ENCODE measurements at regions of chr9 and their contacts with region 1.

Region 1: DNA sequence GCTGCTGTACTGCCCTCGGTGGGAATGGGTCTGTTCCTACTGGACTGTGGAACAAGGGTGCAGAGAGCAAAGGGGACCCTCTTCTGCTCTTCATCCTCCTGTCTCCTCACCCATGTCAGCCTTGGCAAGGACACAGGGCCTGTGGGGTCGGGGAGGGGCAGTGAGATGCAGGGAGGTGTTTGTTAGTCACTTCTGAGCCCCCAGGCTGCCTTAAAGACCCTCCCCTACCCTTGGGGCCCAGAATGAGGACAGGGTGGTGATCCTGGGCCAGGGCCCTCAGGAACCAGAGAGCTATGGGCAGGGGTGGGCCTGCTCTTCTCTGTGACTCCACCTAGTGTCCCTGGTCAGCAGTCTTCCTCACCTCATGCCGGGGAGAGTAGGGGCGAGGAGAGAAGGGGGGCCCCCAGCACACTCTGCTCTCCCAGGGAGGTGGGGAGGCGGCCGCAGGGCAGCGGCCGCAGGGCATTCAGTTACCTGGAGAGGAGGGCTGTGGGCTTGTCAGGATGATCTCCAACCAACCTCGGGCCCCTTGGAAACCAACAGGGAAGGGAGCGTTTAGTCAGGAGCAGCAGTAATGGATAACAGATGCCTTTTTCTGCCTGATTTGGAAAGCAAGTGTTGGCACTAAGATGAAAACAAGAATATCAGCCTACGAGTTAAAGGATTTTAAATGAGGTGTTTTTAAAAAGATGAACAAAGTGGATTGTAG is 62.0 kb upstream of the GARNL3 start:
- DNase-seq: peak; percentile 60
- H3K4me3 ChIP-seq: no peak overlapping the region
- H3K27ac ChIP-seq: no peak overlapping the region
- H3K4me1 ChIP-seq: no peaks in the 10 kb centered on the region
- H3K27me3 ChIP-seq: peaks cover 3% of the 10 kb centered on the region; the same call in 1 of the 2 replicates

Region 2: GRCh38 chr9:126939821-126940221 is 262.8 kb before region 1 on chr9:
- in situ Hi-C with region 1: loop called (anchors 5 kb)
- DNase-seq: no peak
- H3K4me3 ChIP-seq: no peak overlapping the region
- H3K27ac ChIP-seq: no peak overlapping the region
- H3K4me1 ChIP-seq: no peaks in the 10 kb centered on the region
- H3K27me3 ChIP-seq: no peaks in the 10 kb centered on the region; the same call in 1 of the 2 replicates

Region 3: GRCh38 chr9:127264462-127265219 is 62.0 kb after region 1 on chr9 and contains the start of gene GARNL3:
- in situ Hi-C with region 1: no loop called
- DNase-seq: no peak
- H3K4me3 ChIP-seq: no peak within 1 kb of the TSS
- H3K27ac ChIP-seq: no peak within 1 kb of the TSS
- H3K4me1 ChIP-seq: no peaks in the 10 kb centered on the region
- H3K27me3 ChIP-seq: no peaks in the 10 kb centered on the region; the same call in 1 of the 2 replicates
- total RNA-seq, gene GARNL3: 0.13 and 0.43 TPM in 2 replicates

Measured in GM23248 (cell line).